Activated CD4-positive, alpha-beta T cell treated with anti-CD3 and anti-CD28 coated beads, Interleukin-2, amount 10 ng/mL, durations not matched to agents 24 days and 14 days (primary cell): ENCODE measurements at regions of chr20 and their contacts with region 1.

Region 1: GRCh38 chr20:53939572-53940359 is 130.6 kb downstream of the BCAS1 start:
- DNase-seq: peak; percentile 91
- H3K4me3 Mint-ChIP-seq: no peak overlapping the region
- H3K27ac Mint-ChIP-seq: peak overlapping the region; percentile 8
- H3K4me1 Mint-ChIP-seq: peaks cover 45% of the 10 kb centered on the region
- H3K27me3 Mint-ChIP-seq: no peaks in the 10 kb centered on the region

Region 2: DNA sequence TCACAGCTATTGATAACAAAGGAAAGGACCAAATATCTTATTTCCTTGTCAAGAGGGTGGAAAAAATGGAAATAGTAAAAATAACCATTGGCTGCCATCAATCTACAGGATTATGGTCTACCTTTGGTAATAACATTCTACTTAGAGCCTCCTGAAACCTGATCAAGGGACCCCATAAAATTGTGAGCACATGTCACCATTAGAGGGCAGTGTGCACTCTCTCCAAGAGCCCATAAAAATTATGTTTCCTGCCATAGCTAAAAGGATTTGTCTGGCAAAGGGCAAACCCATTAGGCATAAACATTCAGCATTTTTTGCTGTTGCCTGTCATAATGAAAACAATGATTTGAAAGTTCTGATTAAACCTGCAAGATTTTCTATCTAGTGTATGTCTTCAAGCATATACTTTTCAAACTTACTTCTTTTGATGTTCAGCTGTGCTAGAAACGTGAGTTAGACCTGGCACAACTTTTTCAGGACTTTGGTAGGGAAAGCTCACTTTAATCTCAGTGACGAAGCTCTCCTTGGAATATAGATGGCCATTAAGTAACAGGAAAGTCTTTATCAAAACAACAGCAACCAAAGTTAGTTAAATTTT is 1627.5 kb before region 1 on chr20:
- intact Hi-C with region 1: loop called (anchors 10 kb)
- DNase-seq: peak; percentile 86
- H3K4me3 Mint-ChIP-seq: no peak overlapping the region
- H3K27ac Mint-ChIP-seq: no peak overlapping the region
- H3K4me1 Mint-ChIP-seq: peaks cover 6% of the 10 kb centered on the region
- H3K27me3 Mint-ChIP-seq: peaks cover 2% of the 10 kb centered on the region

Region 3: DNA sequence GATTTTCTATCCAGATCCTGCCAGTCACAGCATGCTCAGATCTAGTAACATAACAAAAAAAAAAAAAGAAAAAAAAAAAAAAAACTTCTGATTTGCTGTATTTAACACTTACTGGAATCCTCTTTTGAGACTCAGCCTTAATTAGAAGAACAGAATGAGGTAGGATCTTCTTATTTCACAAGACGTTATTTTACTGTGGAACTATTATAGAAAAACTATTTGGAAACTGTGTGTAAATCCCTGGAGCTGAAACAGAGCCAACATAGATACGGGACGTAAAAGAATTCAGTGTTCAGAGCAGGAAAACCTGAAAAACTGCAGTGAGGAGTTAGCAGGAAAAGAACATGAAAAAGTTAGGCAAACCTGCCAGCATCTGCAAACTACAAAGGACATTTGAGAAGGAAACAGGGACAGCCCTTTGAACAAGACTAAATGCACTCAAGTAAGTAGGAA is 342.7 kb before region 1 on chr20:
- intact Hi-C with region 1: no loop called
- DNase-seq: no peak
- H3K4me3 Mint-ChIP-seq: peak overlapping the region; percentile 83
- H3K27ac Mint-ChIP-seq: peak overlapping the region; percentile 91
- H3K4me1 Mint-ChIP-seq: peaks cover 45% of the 10 kb centered on the region
- H3K27me3 Mint-ChIP-seq: no peaks in the 10 kb centered on the region